ENCODE measurements at regions of chr1 and their contacts with region 1.

Region 1: GRCh38 chr1:185156854-185157598 is at the starts of genes SWT1 and TRMT1L:
- DNase-seq: peak; percentile 99 to 100 (median 100)
- H3K4me3 ChIP-seq: peak within 1 kb of the TSS; percentile 74 to 97 (median 89)
- H3K27ac ChIP-seq: peak within 1 kb of the TSS; percentile 90 to 100 (median 98)
- H3K27me3 ChIP-seq: no peaks in the 10 kb centered on the region
- CTCF ChIP-seq: peak in 22 of 56 donors; percentile 9 to 53 (median 23)
- total RNA-seq, gene SWT1: 5.9 to 16.2 (median 9.2) TPM
- total RNA-seq, gene TRMT1L: 10.1 to 38.0 (median 24.6) TPM

Region 2: GRCh38 chr1:184754476-184755225 is 402.4 kb before region 1 on chr1 and contains the start of gene EDEM3:
- intact Hi-C with region 1: loop called (anchors 1 to 2 kb)
- DNase-seq: peak; percentile 93 to 100 (median 99)
- H3K4me3 ChIP-seq: peak within 1 kb of the TSS; percentile 73 to 99 (median 94)
- H3K27ac ChIP-seq: peak within 1 kb of the TSS; percentile 55 to 96 (median 91)
- H3K27me3 ChIP-seq: no peaks in the 10 kb centered on the region
- CTCF ChIP-seq: peak in 26 of 56 donors; percentile 3 to 63 (median 22)
- total RNA-seq, gene EDEM3: 24.0 to 54.0 (median 35.6) TPM

Region 3: GRCh38 chr1:184805667-184806295 is 351.2 kb before region 1 on chr1:
- intact Hi-C with region 1: loop called in 1 of 2 experiments (anchors 5 kb)
- DNase-seq: peak; percentile 83 to 95 (median 90)
- H3K4me3 ChIP-seq: no peak overlapping the region
- H3K27ac ChIP-seq: peak overlapping the region in 1 of 59 donors; percentile 8
- H3K27me3 ChIP-seq: peaks cover 0 to 4% (median 0%) of the 10 kb centered on the region in 45 donors
- CTCF ChIP-seq: peak; percentile 79 to 99 (median 92)

Region 4: GRCh38 chr1:185044981-185045813 is 111.8 kb before region 1 on chr1 and contains the start of gene RNF2:
- intact Hi-C with region 1: loop called (anchors 1 to 5 kb)
- DNase-seq: peak; percentile 59 to 84 (median 79)
- H3K4me3 ChIP-seq: peak within 1 kb of the TSS; percentile 47 to 94 (median 80)
- H3K27ac ChIP-seq: peak within 1 kb of the TSS; percentile 17 to 95 (median 83)
- H3K27me3 ChIP-seq: no peaks in the 10 kb centered on the region
- CTCF ChIP-seq: peak in 14 of 56 donors; percentile 5 to 52 (median 22)
- total RNA-seq, gene RNF2: 9.8 to 31.1 (median 18.9) TPM

Region 5: GRCh38 chr1:185144233-185144632 is 12.8 kb before region 1 on chr1:
- intact Hi-C with region 1: no loop called
- DNase-seq: no peak
- H3K4me3 ChIP-seq: no peak overlapping the region
- H3K27ac ChIP-seq: no peak overlapping the region
- H3K27me3 ChIP-seq: no peaks in the 10 kb centered on the region
- CTCF ChIP-seq: no peak

Region 6: DNA sequence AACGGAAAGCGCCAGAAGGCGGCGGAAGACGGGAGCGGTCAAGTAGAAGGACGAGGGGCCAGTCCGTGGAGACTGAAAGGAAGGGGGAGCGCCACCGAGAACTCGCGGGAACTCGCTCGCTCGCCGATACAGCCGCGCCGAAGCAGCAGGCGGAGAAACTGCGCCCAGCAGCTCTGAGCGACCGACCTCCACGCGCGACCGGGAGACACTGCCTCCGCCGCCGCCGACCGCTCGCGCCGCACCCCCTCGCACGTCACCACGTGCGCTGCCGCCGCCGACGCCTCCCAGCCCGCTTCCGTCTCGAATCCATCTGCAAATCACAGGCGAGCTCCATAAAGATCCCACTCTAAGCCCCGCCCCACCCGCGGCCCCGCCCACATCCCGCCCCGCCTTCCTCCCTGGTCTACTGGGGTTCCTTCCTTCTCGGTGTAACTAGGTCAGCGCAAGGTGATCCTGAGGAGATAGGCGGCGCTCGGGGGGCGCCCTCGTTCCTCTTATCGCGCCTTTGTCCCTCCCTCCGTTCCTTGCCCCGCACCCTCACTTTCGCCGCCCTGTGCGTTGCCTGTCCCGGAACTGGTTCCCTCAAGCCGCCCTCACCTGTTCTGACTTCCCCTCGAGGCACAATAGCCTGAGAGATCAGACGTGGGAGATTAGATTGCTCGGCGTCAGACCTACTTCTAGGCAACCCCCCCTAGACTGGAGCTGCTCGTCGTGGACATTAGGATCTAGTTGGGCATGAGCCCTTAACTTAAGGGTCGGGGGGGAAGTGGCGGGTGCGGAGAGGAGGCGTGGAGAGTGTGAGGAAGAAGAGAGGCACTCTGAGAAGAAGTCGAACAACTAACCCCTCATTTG is 160.2 kb after region 1 on chr1 and contains the start of gene IVNS1ABP:
- intact Hi-C with region 1: loop called (anchors 2 kb)
- DNase-seq: peak; percentile 85 to 96 (median 94)
- H3K4me3 ChIP-seq: peak within 1 kb of the TSS; percentile 64 to 98 (median 93)
- H3K27ac ChIP-seq: peak within 1 kb of the TSS; percentile 82 to 99 (median 97)
- H3K27me3 ChIP-seq: no peaks in the 10 kb centered on the region
- CTCF ChIP-seq: peak in 40 of 56 donors; percentile 3 to 55 (median 32)
- total RNA-seq, gene IVNS1ABP: 36.8 to 146 (median 59.7) TPM

Region 7: DNA sequence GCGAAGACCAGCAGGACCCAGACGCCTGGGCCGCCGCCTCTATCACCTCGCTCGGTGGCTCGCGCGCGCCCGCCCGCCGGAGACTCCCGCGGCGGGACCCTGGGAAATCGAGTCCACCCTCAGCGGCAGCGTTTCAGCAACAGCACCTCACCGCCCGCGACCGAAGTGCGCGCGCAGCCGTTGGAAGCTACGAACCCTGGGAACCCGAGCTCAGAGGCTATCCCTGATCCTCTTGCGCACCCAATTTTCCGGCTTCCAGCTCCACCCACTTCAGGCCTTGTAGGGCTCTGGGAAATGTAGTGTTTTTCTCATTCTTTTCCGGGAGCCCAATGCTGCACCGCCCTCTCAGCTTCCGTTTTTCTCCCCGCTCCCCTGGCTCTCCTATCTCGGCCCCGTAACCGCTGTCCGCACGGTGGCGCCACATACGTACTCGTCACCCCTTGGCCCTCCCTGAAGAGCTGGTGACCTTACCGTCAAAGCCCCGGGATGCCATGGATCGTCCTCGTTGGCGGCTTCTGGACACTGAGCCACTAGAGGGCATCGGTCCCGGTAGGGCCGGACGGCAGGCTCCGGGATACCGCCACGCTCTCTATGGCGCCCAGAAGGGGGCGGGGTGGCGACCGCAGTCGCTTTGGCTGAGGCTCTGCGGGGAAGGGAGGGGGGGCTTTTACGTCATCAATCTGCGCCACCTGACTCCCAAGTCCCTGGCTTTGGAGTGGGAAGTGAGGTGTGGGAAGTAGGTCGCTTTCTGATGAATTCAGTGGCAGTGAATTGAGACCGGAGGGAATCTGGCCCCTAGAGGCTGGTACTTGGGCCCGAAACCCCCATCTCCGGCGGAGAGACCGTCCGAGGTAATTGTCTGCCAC is 1218.3 kb after region 1 on chr1 and contains the starts of genes ODR4 and TPR:
- intact Hi-C with region 1: loop called in 1 of 2 experiments (anchors 2 kb)
- DNase-seq: peak; percentile 94 to 97 (median 96)
- H3K4me3 ChIP-seq: peak within 1 kb of the TSS; percentile 63 to 99 (median 92)
- H3K27ac ChIP-seq: peak within 1 kb of the TSS; percentile 86 to 99 (median 97)
- H3K27me3 ChIP-seq: no peaks in the 10 kb centered on the region
- CTCF ChIP-seq: peak; percentile 72 to 98 (median 91)
- total RNA-seq, gene ODR4: 19.6 to 46.4 (median 29.3) TPM
- total RNA-seq, gene TPR: 56.1 to 92.2 (median 74.2) TPM

Measured in dorsolateral prefrontal cortex (tissue), 120 donors.